ENCODE measurements at regions of chr2 and their contacts with region 1.

Region 1: DNA sequence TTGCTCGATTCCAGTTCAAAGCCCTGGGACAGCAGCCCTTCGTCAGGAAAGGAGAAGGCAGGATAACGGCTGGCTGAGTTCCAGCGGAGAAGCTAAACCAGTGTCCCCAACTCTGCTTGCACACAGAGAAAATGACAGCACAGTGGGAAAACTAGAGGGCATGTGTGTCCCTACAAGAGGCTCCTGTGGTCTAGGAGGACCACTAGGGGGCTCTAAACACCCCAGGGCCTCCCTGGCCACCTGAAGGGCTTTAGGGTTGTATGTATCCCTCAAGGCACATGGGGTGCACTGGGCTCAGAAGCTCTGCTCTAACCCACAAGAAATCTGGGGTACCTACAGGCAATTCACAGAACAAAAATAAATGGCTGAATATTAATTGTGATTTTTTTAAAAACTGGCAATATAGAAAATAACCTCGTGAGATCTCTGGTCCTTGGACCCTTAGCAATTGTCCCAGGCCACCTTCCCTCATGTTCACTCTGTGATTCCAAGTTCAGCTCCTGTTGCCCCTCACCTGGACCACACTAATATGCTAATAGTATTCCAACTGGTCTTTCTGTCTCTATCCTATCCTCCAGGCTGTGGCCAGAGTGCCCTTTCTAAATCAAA is 17.5 kb downstream of the STAT1 start:
- DNase-seq: peak; percentile 47
- H3K4me3 Mint-ChIP-seq: no peak overlapping the region
- H3K27ac Mint-ChIP-seq: peak overlapping the region; percentile 25
- H3K4me1 Mint-ChIP-seq: peaks cover 8% of the 10 kb centered on the region
- H3K27me3 Mint-ChIP-seq: no peaks in the 10 kb centered on the region
- CTCF ChIP-seq: peak; percentile 43

Region 2: GRCh38 chr2:190981333-190981732 is 15.1 kb before region 1 on chr2:
- CTCF ChIA-PET with region 1: no interaction called
- POLR2A ChIA-PET with region 1: no interaction called
- intact Hi-C with region 1: no loop called
- DNase-seq: no peak
- H3K4me3 Mint-ChIP-seq: no peak overlapping the region
- H3K27ac Mint-ChIP-seq: no peak overlapping the region
- H3K4me1 Mint-ChIP-seq: peaks cover 7% of the 10 kb centered on the region
- H3K27me3 Mint-ChIP-seq: no peaks in the 10 kb centered on the region
- CTCF ChIP-seq: no peak

Region 3: GRCh38 chr2:191013932-191014652 is 17.6 kb after region 1 on chr2 and contains the start of gene STAT1:
- CTCF ChIA-PET with region 1: interaction called, 4 read pairs
- POLR2A ChIA-PET with region 1: interaction called, 40 read pairs
- intact Hi-C with region 1: no loop called
- DNase-seq: peak; percentile 90
- H3K4me3 Mint-ChIP-seq: no peak within 1 kb of the TSS
- H3K27ac Mint-ChIP-seq: no peak within 1 kb of the TSS
- H3K4me1 Mint-ChIP-seq: peaks cover 8% of the 10 kb centered on the region
- H3K27me3 Mint-ChIP-seq: peaks cover 11% of the 10 kb centered on the region
- CTCF ChIP-seq: no peak
- total RNA-seq, gene STAT1: 32.3 and 36.9 TPM in 2 replicates

Region 4: DNA sequence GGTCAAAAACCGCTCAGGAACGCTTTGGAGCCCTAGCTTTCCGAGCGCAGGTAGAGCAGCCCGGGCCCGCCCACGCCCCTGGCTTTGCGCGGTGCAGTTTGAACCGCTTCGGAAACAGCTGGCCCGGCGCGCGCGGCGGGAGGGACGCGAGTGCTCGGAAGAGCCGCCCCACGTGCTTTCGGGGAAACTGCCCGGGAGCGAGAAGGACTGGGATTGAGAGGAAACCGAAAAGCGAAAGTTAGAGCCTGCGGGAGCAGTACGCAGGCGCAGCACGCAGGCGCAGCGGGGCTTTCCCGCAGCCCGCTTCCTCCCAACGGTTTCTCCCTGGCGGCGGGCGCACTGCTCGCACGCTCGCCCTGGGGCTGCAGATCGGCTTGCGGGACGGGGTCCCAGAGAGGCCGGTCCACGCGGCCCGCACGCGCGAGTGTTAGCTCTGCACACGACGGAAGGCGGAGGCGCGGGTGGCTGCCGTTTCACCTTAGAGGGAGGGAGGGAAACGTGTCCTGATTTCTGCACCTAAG is 23.8 kb after region 1 on chr2:
- CTCF ChIA-PET with region 1: no interaction called
- POLR2A ChIA-PET with region 1: interaction called, 40 read pairs
- intact Hi-C with region 1: no loop called
- DNase-seq: peak; percentile 97
- H3K4me3 Mint-ChIP-seq: no peak overlapping the region
- H3K27ac Mint-ChIP-seq: no peak overlapping the region
- H3K4me1 Mint-ChIP-seq: no peaks in the 10 kb centered on the region
- H3K27me3 Mint-ChIP-seq: peaks cover 11% of the 10 kb centered on the region
- CTCF ChIP-seq: no peak

Region 5: GRCh38 chr2:191030521-191031154 is 34.2 kb after region 1 on chr2:
- CTCF ChIA-PET with region 1: interaction called, 4 read pairs
- POLR2A ChIA-PET with region 1: no interaction called
- intact Hi-C with region 1: loop called (anchors 5 kb)
- DNase-seq: peak; percentile 59
- H3K4me3 Mint-ChIP-seq: no peak overlapping the region
- H3K27ac Mint-ChIP-seq: no peak overlapping the region
- H3K4me1 Mint-ChIP-seq: no peaks in the 10 kb centered on the region
- H3K27me3 Mint-ChIP-seq: no peaks in the 10 kb centered on the region
- CTCF ChIP-seq: peak; percentile 61

Region 6: DNA sequence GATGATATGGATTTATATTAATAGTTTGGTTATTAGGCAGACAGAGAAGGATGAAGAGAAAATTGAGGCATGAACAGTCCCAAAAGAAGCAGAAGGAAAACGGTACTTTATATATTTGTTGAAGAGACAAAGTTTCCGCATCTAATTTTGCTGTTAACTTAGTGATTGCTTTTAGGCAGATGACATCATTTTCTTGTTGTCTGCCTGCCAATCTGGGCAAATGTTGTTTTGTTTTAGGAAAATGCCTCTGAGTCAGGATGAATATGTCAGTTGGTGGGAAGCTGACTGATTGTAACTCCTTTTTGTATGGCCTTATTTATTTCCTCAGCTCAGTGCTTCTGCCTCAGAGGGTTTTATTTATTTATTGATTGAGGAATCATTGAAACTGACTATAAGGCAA is 903.0 kb after region 1 on chr2:
- CTCF ChIA-PET with region 1: no interaction called
- POLR2A ChIA-PET with region 1: no interaction called
- intact Hi-C with region 1: no loop called
- DNase-seq: peak; percentile 88
- H3K4me3 Mint-ChIP-seq: peak overlapping the region; percentile 24
- H3K27ac Mint-ChIP-seq: peak overlapping the region; percentile 86
- H3K4me1 Mint-ChIP-seq: peaks cover 41% of the 10 kb centered on the region
- H3K27me3 Mint-ChIP-seq: no peaks in the 10 kb centered on the region
- CTCF ChIP-seq: no peak

Measured in MCF 10A (cell line).